ENCODE measurements at regions of chr10 and their contacts with region 1.

Region 1: GRCh38 chr10:4372601-4373000 is 453.4 kb upstream of the AKR1E2 start:
- DNase-seq: no peak
- H3K4me3 ChIP-seq: no peak overlapping the region
- H3K27ac ChIP-seq: peak overlapping the region; percentile 8 to 48
- H3K4me1 ChIP-seq: no peaks in the 10 kb centered on the region
- H3K27me3 ChIP-seq: no peaks in the 10 kb centered on the region
- CTCF ChIP-seq: no peak
- POLR2A ChIP-seq: no peak

Region 2: GRCh38 chr10:4431114-4431863 is 58.7 kb after region 1 on chr10:
- intact Hi-C with region 1: no loop called
- DNase-seq: no peak
- H3K4me3 ChIP-seq: no peak overlapping the region
- H3K27ac ChIP-seq: no peak overlapping the region
- H3K4me1 ChIP-seq: no peaks in the 10 kb centered on the region
- H3K27me3 ChIP-seq: no peaks in the 10 kb centered on the region
- CTCF ChIP-seq: no peak
- POLR2A ChIP-seq: no peak

Region 3: DNA sequence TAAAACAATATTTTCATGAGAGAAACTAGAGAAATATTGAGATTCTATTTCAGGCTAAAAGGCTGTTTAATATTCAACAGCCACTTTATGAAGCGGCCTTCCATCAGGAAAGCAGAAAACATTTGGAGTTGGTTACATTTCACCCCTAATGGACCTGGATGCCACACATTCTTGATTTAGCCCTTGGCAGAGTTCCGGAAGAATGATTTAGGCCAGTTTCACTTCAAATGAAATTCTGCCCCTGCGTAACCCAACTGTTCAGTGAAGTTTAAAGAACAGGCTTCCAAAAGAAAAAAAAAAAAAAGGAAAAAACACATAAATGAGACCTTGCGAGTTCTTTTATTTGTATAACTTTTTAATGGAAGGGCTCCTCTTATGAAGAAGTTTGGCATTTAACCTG is 214.2 kb after region 1 on chr10:
- intact Hi-C with region 1: loop called (anchors 5 kb)
- DNase-seq: no peak
- H3K4me3 ChIP-seq: no peak overlapping the region
- H3K27ac ChIP-seq: no peak overlapping the region
- H3K4me1 ChIP-seq: no peaks in the 10 kb centered on the region
- H3K27me3 ChIP-seq: no peaks in the 10 kb centered on the region
- CTCF ChIP-seq: no peak
- POLR2A ChIP-seq: no peak

Region 4: GRCh38 chr10:4755299-4755989 is 382.8 kb after region 1 on chr10:
- intact Hi-C with region 1: loop called (anchors 5 kb)
- DNase-seq: no peak
- H3K4me3 ChIP-seq: no peak overlapping the region
- H3K27ac ChIP-seq: no peak overlapping the region
- H3K4me1 ChIP-seq: no peaks in the 10 kb centered on the region
- H3K27me3 ChIP-seq: no peaks in the 10 kb centered on the region
- CTCF ChIP-seq: no peak
- POLR2A ChIP-seq: no peak